ENCODE measurements at regions of chr6 and their contacts with region 1.

Region 1: GRCh38 chr6:143427109-143427817 is 23.2 kb downstream of the ADAT2 start:
- DNase-seq: peak; percentile 65 to 82
- H3K4me3 ChIP-seq: no peak overlapping the region
- H3K27ac ChIP-seq: no peak overlapping the region
- H3K4me1 ChIP-seq: peaks cover 0 to 10% (median 0%) of the 10 kb centered on the region in 4 donors
- H3K27me3 ChIP-seq: no peaks in the 10 kb centered on the region
- CTCF ChIP-seq: peak; percentile 88 to 97

Region 2: GRCh38 chr6:142561511-142562265 is 865.6 kb before region 1 on chr6:
- intact Hi-C with region 1: loop called (anchors 5 kb)
- DNase-seq: no peak
- H3K4me3 ChIP-seq: no peak overlapping the region
- H3K27ac ChIP-seq: no peak overlapping the region
- H3K4me1 ChIP-seq: peaks cover 0 to 4% (median under 1%) of the 10 kb centered on the region in 4 donors
- H3K27me3 ChIP-seq: no peaks in the 10 kb centered on the region
- CTCF ChIP-seq: no peak

Region 3: DNA sequence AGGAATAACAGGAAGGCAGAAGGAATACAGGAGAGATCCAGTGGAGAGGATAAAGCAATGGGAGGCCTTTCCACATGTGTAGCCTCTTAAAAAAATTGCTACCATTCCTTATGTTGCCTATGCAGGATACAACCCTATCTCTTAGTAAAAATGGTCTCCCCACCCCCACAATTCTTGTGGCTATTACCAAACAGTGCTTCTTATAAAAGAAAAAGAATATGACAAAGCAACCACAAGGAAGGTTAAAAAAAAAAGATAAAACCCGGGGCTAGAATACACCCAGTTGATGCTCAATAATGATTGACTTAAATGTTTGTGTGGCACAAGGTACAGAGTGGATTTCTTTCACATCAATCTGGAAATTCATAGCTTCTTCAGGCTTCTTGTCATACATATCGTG is 733.2 kb before region 1 on chr6:
- intact Hi-C with region 1: loop called (anchors 2 kb)
- DNase-seq: no peak
- H3K4me3 ChIP-seq: no peak overlapping the region
- H3K27ac ChIP-seq: no peak overlapping the region
- H3K4me1 ChIP-seq: peaks cover 0 to 51% (median 18%) of the 10 kb centered on the region in 4 donors
- H3K27me3 ChIP-seq: no peaks in the 10 kb centered on the region
- CTCF ChIP-seq: no peak

Region 4: GRCh38 chr6:143397229-143398222 is 29.7 kb before region 1 on chr6:
- intact Hi-C with region 1: no loop called
- DNase-seq: peak; percentile 58 to 65
- H3K4me3 ChIP-seq: no peak overlapping the region
- H3K27ac ChIP-seq: no peak overlapping the region
- H3K4me1 ChIP-seq: peaks cover 0 to 28% (median 13%) of the 10 kb centered on the region in 4 donors
- H3K27me3 ChIP-seq: no peaks in the 10 kb centered on the region
- CTCF ChIP-seq: no peak

Region 5: DNA sequence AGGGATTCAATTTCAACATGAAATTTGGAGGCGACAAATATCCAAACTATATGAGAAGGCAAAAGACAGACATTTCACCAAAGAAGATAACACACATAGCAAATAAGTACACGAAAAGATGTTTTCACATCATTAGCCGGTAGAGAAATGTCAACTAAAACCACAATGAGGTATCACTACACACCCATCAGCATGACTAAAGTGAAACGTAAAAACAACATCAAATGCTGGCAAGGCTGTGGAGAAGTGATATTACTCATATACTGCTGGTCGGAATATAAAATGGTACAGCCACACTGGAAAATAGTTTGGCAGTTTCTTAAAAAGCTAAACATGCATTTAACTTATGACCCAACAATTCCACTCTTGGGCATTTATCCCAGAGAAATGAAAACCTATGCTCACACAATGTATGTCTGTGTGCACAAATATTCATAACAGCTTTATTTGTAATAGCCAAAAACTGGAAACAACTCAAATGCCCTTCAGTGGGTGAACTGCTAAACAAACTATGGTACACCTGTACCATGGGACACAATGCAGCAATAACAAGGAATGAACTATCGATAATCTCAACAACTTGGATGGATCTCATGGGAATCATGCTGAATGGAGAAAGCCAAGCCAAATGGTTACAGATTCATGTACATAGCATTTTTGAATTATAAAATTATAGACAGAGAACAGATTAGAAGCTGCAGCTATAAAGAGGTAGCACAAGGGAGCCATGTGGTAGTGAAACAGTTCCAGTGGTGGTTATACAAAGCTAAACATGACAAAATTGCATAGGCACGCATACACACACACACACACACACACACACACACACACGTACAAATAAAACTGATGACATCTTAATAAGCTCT is 14.7 kb after region 1 on chr6:
- intact Hi-C with region 1: no loop called
- DNase-seq: no peak
- H3K4me3 ChIP-seq: no peak overlapping the region
- H3K27ac ChIP-seq: no peak overlapping the region
- H3K4me1 ChIP-seq: no peaks in the 10 kb centered on the region
- H3K27me3 ChIP-seq: no peaks in the 10 kb centered on the region
- CTCF ChIP-seq: no peak

Region 6: DNA sequence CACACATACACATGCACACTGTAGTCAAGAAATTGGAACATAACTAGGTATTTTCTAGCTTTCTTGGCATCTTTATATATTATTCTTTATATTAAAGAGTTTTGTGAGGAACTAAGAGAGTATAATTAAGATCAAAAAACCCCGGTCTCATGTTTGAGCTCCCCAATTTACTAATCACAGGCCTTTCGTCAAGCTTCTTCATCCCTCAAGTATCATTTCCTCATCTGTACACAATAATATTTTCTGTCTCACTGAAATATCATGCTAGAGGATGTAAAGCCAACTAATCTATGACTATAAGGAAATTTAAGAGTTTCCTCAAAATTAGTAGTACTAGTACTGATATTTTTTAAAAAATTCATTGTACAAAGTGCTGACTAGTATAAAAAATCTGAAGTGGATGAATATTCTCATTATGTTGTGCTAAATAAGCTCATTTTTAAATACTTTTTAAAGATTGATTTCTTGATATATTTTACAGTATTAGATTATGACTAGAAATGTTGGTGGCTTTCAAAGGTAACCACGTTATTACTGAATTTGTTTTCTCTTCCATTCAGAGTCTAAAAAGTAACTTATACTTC is 51.3 kb after region 1 on chr6:
- intact Hi-C with region 1: no loop called
- DNase-seq: no peak
- H3K4me3 ChIP-seq: no peak overlapping the region
- H3K27ac ChIP-seq: no peak overlapping the region
- H3K4me1 ChIP-seq: no peaks in the 10 kb centered on the region
- H3K27me3 ChIP-seq: no peaks in the 10 kb centered on the region
- CTCF ChIP-seq: no peak

Measured in tibial artery (tissue), 4 donors.